ENCODE measurements at regions of chr3 and their contacts with region 1.

Region 1: DNA sequence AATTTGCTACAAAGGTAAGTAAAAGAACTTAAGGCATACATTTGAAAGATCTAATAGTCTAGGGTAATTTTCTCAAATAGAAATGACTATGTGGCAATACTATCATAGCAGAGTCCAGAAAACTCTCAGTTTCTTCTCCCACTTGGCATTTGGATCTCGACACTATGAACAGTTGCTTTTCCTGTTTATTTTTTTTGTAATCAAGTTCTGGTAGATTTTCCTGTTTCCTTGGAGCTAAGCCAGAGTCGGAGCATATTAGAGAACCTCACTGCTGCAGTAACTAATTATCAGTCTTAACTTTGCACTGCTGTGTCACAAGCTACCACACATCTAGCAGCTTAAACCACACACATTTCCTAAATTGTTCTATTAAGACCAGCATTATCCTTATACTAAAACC is 44.9 kb upstream of the ZNF385D start:
- DNase-seq: no peak
- ATAC-seq: peak in 1 of 2 donors; percentile 32
- H3K4me3 ChIP-seq: peak overlapping the region in 1 of 4 donors; percentile 2
- H3K27ac ChIP-seq: peak overlapping the region in 3 of 4 donors; percentile 15 to 64 (median 29)
- H3K4me1 ChIP-seq: peaks cover 15 to 34% of the 10 kb centered on the region in 2 donors
- H3K27me3 ChIP-seq: no peaks in the 10 kb centered on the region
- CTCF ChIP-seq: no peak
- POLR2A ChIP-seq: no peak

Region 2: GRCh38 chr3:21839592-21839991 is 43.7 kb after region 1 on chr3:
- in situ Hi-C with region 1: no loop called
- intact Hi-C with region 1: loop called (anchors 1 kb)
- DNase-seq: peak in 1 of 2 donors; percentile 10
- ATAC-seq: peak; percentile 42 to 51
- H3K4me3 ChIP-seq: no peak overlapping the region
- H3K27ac ChIP-seq: peak overlapping the region in 2 of 4 donors; percentile 22 to 45
- H3K4me1 ChIP-seq: peaks cover 0 to 12% of the 10 kb centered on the region in 2 donors
- H3K27me3 ChIP-seq: no peaks in the 10 kb centered on the region
- CTCF ChIP-seq: peak in 3 of 5 experiments; percentile 20 to 41 (median 38)
- POLR2A ChIP-seq: no peak